ENCODE measurements at regions of chr7 and their contacts with region 1.

Region 1: DNA sequence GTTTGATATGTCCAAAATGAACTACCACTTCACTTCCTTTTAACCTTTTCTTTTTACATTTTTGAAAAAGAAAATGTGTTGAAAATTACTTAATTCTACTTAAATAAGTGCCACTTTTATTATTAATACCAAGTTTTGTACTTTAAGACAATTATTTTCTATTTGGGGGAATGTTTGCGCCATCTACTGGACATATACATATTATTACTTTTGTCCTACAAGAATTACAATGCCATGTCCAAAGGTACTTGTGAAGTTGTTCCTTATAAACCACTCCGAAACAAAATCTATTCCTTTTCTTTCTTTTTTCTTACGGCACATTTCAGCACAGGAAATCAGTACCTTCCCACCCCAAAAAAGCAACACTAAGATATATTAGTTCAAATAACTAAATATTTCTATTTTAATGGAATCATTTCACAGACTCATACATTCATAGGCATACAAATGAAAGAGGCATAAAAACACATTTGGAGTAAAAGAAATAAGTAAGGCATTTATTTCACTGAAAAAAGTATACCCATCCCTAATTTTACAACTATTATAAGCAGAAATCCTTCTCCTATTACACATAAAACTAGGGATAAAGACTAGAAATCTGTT is 169.9 kb downstream of the RNF133 start:
- DNase-seq: peak in 1 of 9 donors; percentile 0
- ATAC-seq: no peak
- H3K4me3 ChIP-seq: no peak overlapping the region
- H3K4me3 Mint-ChIP-seq: no peak overlapping the region
- H3K27ac ChIP-seq: no peak overlapping the region
- H3K27ac Mint-ChIP-seq: no peak overlapping the region
- H3K4me1 ChIP-seq: no peaks in the 10 kb centered on the region
- H3K4me1 Mint-ChIP-seq: no peaks in the 10 kb centered on the region
- H3K27me3 ChIP-seq: no peaks in the 10 kb centered on the region
- H3K27me3 Mint-ChIP-seq: peaks cover 0 to 4% (median 0%) of the 10 kb centered on the region in 5 donors

Region 2: DNA sequence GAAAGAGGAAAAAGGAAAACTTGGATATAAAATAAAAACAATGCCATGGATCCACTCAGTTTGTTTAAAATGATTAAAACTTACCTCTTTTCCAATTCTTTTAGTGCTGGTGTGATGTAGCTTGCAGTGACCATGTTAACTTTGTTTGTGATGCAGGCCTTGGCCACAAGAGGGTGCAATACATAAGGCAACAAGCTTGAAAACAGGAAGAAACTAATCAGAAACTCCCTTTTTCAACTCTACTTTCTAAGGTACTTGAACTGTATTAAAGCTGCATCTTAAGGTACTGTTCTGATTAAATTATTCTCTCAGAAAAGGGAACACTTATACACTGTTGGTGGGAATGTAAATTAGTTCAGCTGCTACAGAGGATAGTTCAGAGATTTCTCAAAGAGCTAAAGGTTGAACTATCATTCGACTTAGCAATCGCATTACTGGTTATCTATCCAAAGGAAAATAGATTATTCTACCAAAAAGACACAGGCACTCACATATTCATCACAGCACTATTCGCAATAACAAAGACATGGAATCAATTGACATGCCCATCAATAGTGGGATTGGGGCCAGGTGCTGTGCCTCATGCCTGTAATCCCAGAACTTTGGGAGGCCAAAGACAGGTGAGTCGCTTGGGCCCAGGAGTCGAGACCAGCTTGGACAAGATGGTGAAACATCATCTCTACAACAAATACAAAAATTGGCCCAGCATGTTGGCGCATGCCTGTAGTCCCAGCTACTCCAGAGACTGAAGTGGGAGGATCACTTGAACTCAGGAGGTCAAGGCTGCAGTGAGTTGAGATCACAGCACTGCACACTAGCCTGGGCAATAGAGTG is 435.8 kb before region 1 on chr7:
- CTCF ChIA-PET with region 1: no interaction called
- POLR2A ChIA-PET with region 1: no interaction called
- intact Hi-C with region 1: loop called in 1 of 2 experiments (anchors 1 kb)
- DNase-seq: peak in 8 of 9 donors; percentile 14 to 58 (median 46)
- ATAC-seq: peak; percentile 82
- H3K4me3 ChIP-seq: no peak overlapping the region
- H3K4me3 Mint-ChIP-seq: no peak overlapping the region
- H3K27ac ChIP-seq: no peak overlapping the region
- H3K27ac Mint-ChIP-seq: peak overlapping the region in 2 of 9 donors; percentile 8 to 13
- H3K4me1 ChIP-seq: no peaks in the 10 kb centered on the region
- H3K4me1 Mint-ChIP-seq: peaks cover 0 to 4% (median 0%) of the 10 kb centered on the region in 7 donors
- H3K27me3 ChIP-seq: no peaks in the 10 kb centered on the region
- H3K27me3 Mint-ChIP-seq: no peaks in the 10 kb centered on the region

Region 3: DNA sequence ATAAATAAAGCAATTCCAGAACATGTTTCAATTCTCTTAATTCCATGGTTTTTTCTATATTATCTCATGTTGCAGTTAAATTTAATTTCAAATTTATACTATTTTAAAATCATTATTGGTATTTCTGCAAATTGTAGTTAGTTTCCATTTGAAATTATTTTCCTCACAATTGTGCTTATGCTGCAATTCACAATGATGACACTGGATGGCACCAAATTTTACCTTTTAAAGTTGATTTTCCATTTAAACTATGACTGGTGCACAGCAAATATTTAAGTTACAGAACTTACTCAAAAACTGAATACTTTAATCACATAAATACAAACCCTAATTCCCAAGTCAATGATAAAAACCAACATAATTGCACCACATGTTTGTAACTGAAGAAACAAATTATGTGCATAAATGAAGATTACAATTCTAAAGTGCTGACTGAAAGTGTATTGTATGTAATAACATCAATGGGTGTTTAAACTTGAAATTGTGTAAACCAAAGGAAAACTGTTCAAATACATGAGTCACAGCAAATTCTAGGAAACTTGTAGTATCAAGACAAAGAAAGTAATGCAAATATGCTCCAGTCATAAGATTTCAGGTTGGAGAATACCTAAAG is 309.6 kb before region 1 on chr7:
- CTCF ChIA-PET with region 1: no interaction called
- POLR2A ChIA-PET with region 1: no interaction called
- intact Hi-C with region 1: loop called in 1 of 2 experiments (anchors 1 kb)
- DNase-seq: no peak
- ATAC-seq: no peak
- H3K4me3 ChIP-seq: no peak overlapping the region
- H3K4me3 Mint-ChIP-seq: no peak overlapping the region
- H3K27ac ChIP-seq: no peak overlapping the region
- H3K27ac Mint-ChIP-seq: no peak overlapping the region
- H3K4me1 ChIP-seq: no peaks in the 10 kb centered on the region
- H3K4me1 Mint-ChIP-seq: no peaks in the 10 kb centered on the region
- H3K27me3 ChIP-seq: no peaks in the 10 kb centered on the region
- H3K27me3 Mint-ChIP-seq: no peaks in the 10 kb centered on the region